CD4-positive, alpha-beta T cell (primary cell): ENCODE measurements at regions of chr18 and their contacts with region 1.

Region 1: GRCh38 chr18:47772374-47773248 is 157.8 kb downstream of the SMAD2 start:
- DNase-seq: peak; percentile 27 to 68 (median 47)
- ATAC-seq: no peak
- H3K4me3 ChIP-seq: no peak overlapping the region
- H3K4me3 Mint-ChIP-seq: no peak overlapping the region
- H3K27ac ChIP-seq: no peak overlapping the region
- H3K27ac Mint-ChIP-seq: no peak overlapping the region
- H3K4me1 ChIP-seq: no peaks in the 10 kb centered on the region
- H3K4me1 Mint-ChIP-seq: no peaks in the 10 kb centered on the region
- H3K27me3 ChIP-seq: no peaks in the 10 kb centered on the region
- H3K27me3 Mint-ChIP-seq: peaks cover 3% of the 10 kb centered on the region
- CTCF ChIP-seq: peak; percentile 91

Region 2: DNA sequence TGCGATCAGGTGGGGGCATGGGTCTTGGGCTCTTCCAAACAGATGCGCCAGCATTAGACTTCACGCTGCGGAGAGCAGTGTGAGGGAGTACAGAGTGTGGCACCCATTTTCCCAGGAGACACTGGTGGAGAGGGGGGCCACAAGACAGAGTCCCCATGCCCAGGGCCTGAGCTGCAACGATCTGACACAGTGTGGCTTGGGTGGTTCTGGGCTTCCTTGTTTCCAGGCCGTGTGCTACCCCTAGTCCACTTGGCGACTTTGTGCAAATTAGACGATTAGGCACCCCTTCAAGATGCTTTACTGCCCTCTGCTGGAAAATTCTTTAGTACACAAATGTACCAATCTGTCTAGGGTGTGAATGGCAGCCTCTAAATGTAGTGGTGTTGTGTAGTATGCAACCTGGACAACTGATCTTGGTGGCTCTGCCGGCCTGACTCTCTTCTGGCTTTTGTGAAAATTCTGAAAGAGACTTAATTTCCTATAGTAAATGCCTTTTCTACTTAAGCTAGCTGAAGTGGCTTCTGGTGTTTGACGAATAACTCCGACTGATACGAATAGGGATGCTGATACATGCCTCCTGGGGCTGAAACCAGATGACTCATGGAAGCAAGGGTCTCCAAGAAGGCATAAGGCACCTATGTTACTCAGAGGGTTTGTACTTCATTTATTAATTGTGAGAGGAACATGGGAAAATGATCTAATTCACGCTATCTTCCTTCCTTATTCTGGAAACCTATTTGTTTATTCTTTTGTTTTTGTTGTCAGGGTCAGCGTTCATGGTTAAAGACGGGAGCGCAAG is 250.1 kb after region 1 on chr18:
- CTCF ChIA-PET with region 1: no interaction called
- POLR2A ChIA-PET with region 1: no interaction called
- intact Hi-C with region 1: loop called in 1 of 2 experiments (anchors 1 kb)
- DNase-seq: peak in 3 of 14 experiments; percentile 52 to 65 (median 63)
- ATAC-seq: no peak
- H3K4me3 ChIP-seq: no peak overlapping the region
- H3K4me3 Mint-ChIP-seq: no peak overlapping the region
- H3K27ac ChIP-seq: no peak overlapping the region
- H3K27ac Mint-ChIP-seq: no peak overlapping the region
- H3K4me1 ChIP-seq: no peaks in the 10 kb centered on the region
- H3K4me1 Mint-ChIP-seq: peaks cover 5% of the 10 kb centered on the region
- H3K27me3 ChIP-seq: peaks cover 7 to 13% of the 10 kb centered on the region in 2 experiments
- H3K27me3 Mint-ChIP-seq: peaks cover 44% of the 10 kb centered on the region
- CTCF ChIP-seq: peak; percentile 56

Region 3: GRCh38 chr18:48100651-48101165 is 328.1 kb after region 1 on chr18:
- CTCF ChIA-PET with region 1: no interaction called
- POLR2A ChIA-PET with region 1: no interaction called
- intact Hi-C with region 1: loop called in 1 of 2 experiments (anchors 10 kb)
- DNase-seq: no peak
- ATAC-seq: no peak
- H3K4me3 ChIP-seq: no peak overlapping the region
- H3K4me3 Mint-ChIP-seq: no peak overlapping the region
- H3K27ac ChIP-seq: no peak overlapping the region
- H3K27ac Mint-ChIP-seq: no peak overlapping the region
- H3K4me1 ChIP-seq: no peaks in the 10 kb centered on the region
- H3K4me1 Mint-ChIP-seq: no peaks in the 10 kb centered on the region
- H3K27me3 ChIP-seq: peaks cover 4 to 20% of the 10 kb centered on the region in 2 experiments
- H3K27me3 Mint-ChIP-seq: peaks cover 38% of the 10 kb centered on the region
- CTCF ChIP-seq: no peak

Region 4: GRCh38 chr18:48330403-48331022 is 557.9 kb after region 1 on chr18:
- CTCF ChIA-PET with region 1: no interaction called
- POLR2A ChIA-PET with region 1: no interaction called
- intact Hi-C with region 1: loop called in 1 of 2 experiments (anchors 10 kb)
- DNase-seq: no peak
- ATAC-seq: no peak
- H3K4me3 ChIP-seq: no peak overlapping the region
- H3K4me3 Mint-ChIP-seq: no peak overlapping the region
- H3K27ac ChIP-seq: no peak overlapping the region
- H3K27ac Mint-ChIP-seq: no peak overlapping the region
- H3K4me1 ChIP-seq: no peaks in the 10 kb centered on the region
- H3K4me1 Mint-ChIP-seq: no peaks in the 10 kb centered on the region
- H3K27me3 ChIP-seq: peaks cover 0 to 2% of the 10 kb centered on the region in 2 experiments
- H3K27me3 Mint-ChIP-seq: peaks cover 11% of the 10 kb centered on the region
- CTCF ChIP-seq: no peak